ENCODE measurements at regions of chr16 and their contacts with region 1.

Region 1: DNA sequence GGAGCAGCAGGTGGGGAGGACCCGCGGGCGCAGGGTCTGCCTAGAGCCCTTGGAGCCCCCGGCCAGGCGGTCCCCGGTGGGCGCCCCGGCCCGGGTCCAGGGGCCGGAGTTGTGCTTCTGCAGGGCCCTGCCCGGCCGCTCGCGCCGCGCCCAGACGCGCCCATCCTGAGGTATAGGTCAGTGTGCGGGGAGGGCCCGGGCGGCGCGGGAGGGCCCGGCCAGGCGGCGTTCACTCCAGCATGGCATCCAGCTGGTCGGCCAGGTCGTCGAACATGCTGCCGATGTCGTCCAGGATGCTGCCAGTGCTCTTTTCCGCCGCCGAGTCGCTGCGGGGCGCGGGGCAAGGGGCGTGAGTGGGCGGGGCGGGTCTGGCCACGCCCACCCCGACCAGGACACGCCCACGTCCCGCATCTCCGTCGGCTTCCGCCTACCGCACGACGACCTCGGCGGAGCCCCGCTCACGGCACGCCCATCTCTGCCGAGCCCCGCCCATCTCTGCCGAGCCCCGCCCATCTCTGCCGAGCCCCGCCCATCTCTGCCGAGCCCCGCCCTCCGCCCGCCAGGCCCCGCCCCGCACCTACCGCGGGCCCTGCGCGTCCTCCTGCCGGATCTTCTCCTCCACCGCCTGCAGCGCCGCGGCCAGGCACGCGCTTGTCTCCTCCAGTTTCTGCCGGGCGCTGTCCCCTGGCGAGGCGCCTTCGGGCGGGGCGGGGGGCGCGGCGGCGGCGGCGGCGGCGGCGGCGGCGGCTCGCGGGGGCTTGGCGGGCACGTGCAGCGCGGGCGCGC is 17.9 kb downstream of the CASKIN1 start:
- DNase-seq: peak; percentile 70
- ATAC-seq: peak; percentile 80
- H3K4me3 Mint-ChIP-seq: no peak overlapping the region
- H3K27ac Mint-ChIP-seq: no peak overlapping the region
- H3K4me1 Mint-ChIP-seq: no peaks in the 10 kb centered on the region
- H3K27me3 Mint-ChIP-seq: no peaks in the 10 kb centered on the region

Region 2: DNA sequence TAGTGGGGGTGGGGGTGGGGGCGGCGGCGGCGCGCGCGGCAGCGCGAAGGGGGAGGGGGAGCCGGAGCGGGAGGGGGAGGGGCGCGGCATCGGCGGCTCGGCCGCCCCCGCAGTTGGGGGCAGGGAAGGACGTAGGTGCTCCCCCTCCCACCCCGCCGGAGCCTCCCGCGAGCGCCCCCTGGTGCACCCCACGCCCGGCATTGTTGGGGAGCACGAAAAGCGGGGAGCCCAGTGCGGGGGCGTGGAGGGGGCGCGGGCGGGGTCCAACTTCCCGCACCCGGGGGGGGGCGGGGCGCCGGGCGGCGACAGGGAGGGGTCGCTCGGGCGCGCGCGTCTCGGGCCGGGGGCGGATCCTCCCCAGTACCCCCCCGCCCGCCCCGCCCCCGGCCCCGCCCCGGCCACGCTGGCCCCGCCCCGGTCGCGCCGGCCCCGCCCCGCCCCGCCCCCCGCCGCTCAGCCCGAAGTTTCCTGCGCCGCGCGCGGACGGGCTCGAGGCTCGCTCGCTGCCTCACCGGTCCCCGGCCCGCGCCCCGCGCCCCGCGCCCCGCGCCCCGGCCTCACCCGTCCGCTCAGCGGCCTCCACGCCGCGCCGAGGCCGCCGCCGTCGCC is 1025.8 kb before region 1 on chr16 and contains the start of gene CACNA1H:
- CTCF ChIA-PET with region 1: no interaction called
- POLR2A ChIA-PET with region 1: no interaction called
- intact Hi-C with region 1: no loop called
- DNase-seq: peak; percentile 82
- ATAC-seq: peak; percentile 68
- H3K4me3 Mint-ChIP-seq: peak within 1 kb of the TSS; percentile 41
- H3K27ac Mint-ChIP-seq: no peak within 1 kb of the TSS
- H3K4me1 Mint-ChIP-seq: peaks cover 2% of the 10 kb centered on the region
- H3K27me3 Mint-ChIP-seq: peaks cover 7% of the 10 kb centered on the region
- total RNA-seq, gene CACNA1H: 0.86 to 0.98 TPM

Region 3: DNA sequence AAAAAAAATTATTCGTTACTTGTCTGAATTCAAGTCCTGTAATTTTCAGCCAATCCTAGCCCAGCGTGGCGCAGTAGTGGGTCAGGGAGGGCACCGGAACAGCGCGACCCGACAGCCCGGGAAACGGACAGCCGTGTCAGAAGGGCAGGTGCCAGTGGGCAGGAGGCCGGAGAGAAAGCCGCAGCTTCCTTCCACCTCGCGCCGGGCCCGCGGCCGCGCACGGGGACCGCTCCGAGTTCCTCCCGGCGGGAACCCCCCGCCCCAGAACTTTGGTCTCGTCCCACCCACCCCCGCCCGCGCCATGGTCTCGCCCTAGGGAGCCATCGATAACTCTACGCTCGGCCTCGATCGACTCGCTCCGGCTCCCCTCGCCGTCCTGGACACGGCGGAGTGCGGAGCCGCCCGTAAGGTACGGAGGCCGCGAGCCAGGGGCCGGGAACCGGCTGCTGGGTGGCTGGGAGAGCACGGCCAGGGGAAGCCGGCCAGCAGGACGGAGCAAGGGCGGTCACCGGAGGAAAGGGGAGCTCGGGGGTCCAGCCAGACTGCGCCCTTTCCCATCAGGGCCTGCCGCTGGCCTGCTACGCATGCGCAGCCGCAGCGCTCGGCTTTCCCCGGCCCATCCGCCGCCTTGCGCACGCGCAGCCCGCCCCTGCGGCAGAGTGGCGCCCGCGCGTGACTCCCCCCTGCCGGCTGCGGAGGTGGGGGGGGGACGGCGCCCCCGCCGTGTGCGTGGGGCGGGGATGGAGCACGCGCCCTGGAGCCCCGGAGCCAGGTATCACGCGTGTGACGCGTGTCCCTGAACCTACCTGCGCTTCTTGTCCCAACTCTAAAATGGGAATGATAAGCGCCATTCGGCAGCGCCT is 26.8 kb after region 1 on chr16 and contains the start of gene MLST8:
- CTCF ChIA-PET with region 1: no interaction called
- POLR2A ChIA-PET with region 1: no interaction called
- intact Hi-C with region 1: loop called in 1 of 2 experiments (anchors 1 kb)
- DNase-seq: peak; percentile 92
- ATAC-seq: peak; percentile 84
- H3K4me3 Mint-ChIP-seq: peak within 1 kb of the TSS; percentile 83
- H3K27ac Mint-ChIP-seq: peak within 1 kb of the TSS; percentile 84
- H3K4me1 Mint-ChIP-seq: peaks cover 16% of the 10 kb centered on the region
- H3K27me3 Mint-ChIP-seq: no peaks in the 10 kb centered on the region
- total RNA-seq, gene MLST8: 61.3 to 76.1 TPM

Measured in activated CD4-positive, alpha-beta T cell treated with anti-CD3 and anti-CD28 coated beads for 36 hours (primary cell).